Dorsolateral prefrontal cortex (tissue), 120 donors: ENCODE measurements at regions of chr20 and their contacts with region 1.

Region 1: DNA sequence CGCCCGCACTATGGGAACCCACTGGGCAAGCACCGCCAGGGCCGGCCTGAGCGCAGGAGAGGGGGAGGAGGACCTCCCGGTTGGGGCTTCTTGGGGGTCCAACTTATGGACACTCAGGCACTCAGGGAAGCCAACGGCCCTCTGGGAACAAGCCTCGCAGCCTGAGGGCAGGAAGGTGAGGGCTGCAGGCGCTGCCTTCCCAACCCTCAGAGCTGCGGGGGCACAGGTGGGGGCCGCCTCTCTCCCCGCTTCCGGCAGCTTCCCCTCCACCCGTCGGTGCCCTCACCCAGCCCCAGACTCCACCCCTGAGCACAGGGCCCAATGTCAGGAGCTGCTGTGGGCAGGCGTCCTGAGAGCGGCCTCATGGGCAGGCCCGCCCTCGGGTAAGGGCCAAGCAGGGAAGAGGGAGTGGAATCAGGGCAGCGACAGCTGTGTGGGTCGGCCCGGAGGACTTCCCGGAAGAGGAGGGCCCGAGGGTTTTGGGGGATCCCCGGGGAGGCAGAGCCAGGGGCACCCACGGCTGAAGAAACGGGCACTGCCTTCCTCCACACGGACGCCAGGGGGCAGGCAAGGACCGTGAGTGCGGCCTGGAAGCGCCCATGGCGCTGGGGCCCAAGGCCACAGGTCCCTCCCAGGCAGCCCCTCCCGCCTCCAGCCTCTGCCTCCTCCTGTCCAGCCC is 488 bp upstream of the PTK6 start:
- DNase-seq: peak in 9 of 10 donors; percentile 61 to 86 (median 66)
- H3K4me3 ChIP-seq: peak overlapping the region in 42 of 59 donors; percentile 0 to 51 (median 29)
- H3K27ac ChIP-seq: peak overlapping the region in 6 of 59 donors; percentile 9 to 56 (median 36)
- H3K27me3 ChIP-seq: peaks cover 0 to 15% (median 0%) of the 10 kb centered on the region in 45 donors
- CTCF ChIP-seq: peak; percentile 81 to 98 (median 96)

Region 2: GRCh38 chr20:63594043-63594561 is 56.4 kb after region 1 on chr20:
- intact Hi-C with region 1: no loop called
- DNase-seq: no peak
- H3K4me3 ChIP-seq: no peak overlapping the region
- H3K27ac ChIP-seq: peak overlapping the region in 1 of 59 donors; percentile 11
- H3K27me3 ChIP-seq: no peaks in the 10 kb centered on the region
- CTCF ChIP-seq: no peak

Region 3: DNA sequence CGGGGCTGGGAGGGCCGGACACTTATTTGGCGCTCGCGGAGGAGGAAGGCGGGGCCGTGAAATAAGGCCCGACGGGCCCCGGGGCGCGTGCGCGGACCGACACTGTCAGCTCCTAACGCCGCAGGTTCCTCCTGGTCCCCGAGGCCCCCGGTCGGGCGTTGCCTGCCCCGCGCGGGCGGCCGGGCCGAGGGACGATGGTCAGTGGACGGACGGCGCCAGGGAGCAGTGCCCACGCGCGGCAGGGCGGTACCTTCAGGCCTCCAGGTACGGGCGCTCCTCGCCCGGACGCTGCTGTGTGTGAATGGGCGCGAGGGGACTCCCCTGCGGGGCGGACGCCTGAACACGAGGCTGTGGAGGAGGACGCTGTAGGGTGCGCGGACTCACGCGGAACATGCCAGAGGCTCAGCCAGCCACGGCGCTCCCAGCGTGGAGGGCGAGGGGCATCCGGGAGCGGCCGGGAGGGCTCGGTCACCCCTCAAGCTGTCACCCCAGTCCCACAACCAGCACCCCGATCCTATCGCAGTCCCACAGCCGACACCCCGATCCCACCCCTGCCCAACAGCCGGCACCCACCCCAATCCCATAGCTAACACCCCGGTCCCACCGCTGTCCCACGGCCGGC is 89.6 kb after region 1 on chr20:
- intact Hi-C with region 1: loop called in 1 of 2 experiments (anchors 5 kb)
- DNase-seq: peak; percentile 83 to 94 (median 87)
- H3K4me3 ChIP-seq: peak overlapping the region; percentile 52 to 100 (median 97)
- H3K27ac ChIP-seq: peak overlapping the region; percentile 40 to 99 (median 97)
- H3K27me3 ChIP-seq: no peaks in the 10 kb centered on the region
- CTCF ChIP-seq: peak in 4 of 56 donors; percentile 10 to 34 (median 11)

Region 4: DNA sequence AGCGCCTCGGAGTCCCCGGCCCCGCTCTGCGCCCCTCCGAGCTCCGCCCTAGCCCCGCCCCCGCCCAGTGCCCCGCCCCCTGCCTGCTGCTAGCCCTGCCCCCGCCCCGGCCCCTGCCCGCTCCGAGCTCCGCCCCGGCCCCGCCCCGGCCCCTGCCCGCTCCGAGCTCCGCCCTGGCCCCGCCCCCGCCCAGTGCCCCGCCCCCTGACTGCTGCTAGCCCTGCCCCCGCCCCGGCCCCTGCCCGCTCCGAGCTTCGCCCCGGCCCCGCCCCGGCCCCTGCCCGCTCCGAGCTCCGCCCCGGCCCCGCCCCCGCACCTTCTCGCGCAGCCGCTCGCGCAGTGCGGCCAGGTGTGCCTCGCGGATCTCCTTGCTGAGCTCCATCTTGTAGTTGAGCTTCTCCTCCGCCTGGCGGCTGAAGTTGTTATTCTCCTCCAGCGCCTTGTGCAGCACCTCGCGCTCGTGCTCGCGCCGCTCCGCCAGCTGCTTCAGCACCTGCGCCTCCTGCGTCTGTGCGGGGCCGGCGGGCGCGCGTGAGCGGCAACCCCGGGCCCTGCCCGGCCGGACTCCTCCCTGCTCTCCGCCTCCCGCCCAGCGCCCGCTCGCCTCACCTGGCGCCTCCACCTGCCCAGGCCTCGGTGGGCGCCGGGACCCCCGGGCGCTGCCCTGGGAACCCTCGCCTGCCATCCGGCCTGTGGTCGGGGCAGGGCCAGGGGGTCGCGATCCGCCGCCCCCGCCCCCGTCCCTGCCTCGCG is 104.3 kb after region 1 on chr20:
- intact Hi-C with region 1: no loop called
- DNase-seq: peak; percentile 56 to 84 (median 76)
- H3K4me3 ChIP-seq: peak overlapping the region in 58 of 59 donors; percentile 29 to 71 (median 58)
- H3K27ac ChIP-seq: peak overlapping the region in 44 of 59 donors; percentile 6 to 88 (median 72)
- H3K27me3 ChIP-seq: no peaks in the 10 kb centered on the region
- CTCF ChIP-seq: peak in 29 of 56 donors; percentile 8 to 54 (median 22)

Region 5: DNA sequence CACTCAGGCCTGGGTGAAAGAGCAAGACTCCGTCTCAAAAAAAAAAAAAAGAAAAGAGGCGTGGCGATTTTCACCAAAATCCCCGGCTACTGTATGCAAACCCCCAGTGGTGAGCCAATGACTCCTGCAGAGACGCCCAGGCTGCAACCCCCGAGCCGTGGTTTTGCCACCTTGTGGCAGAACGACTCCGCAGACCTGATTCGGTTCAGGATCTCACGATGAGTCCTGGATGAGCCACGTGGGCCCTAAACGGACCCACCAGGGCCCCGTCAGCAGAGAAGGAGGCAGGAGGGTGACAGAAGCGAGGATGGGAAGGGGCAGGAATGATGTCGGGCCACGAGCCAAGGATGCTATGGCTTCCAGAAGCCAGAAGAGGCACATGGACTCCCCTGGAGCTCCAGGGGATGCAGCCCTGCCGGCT is 244.4 kb after region 1 on chr20:
- intact Hi-C with region 1: loop called in 1 of 2 experiments (anchors 5 kb)
- DNase-seq: no peak
- H3K4me3 ChIP-seq: no peak overlapping the region
- H3K27ac ChIP-seq: peak overlapping the region in 9 of 59 donors; percentile 5 to 84 (median 30)
- H3K27me3 ChIP-seq: no peaks in the 10 kb centered on the region
- CTCF ChIP-seq: peak in 2 of 56 donors; percentile 18 to 22

Region 6: GRCh38 chr20:63973636-63974402 is 436.2 kb after region 1 on chr20:
- intact Hi-C with region 1: loop called (anchors 5 kb)
- DNase-seq: peak; percentile 67 to 92 (median 86)
- H3K4me3 ChIP-seq: peak overlapping the region in 55 of 59 donors; percentile 7 to 63 (median 38)
- H3K27ac ChIP-seq: peak overlapping the region in 53 of 59 donors; percentile 6 to 88 (median 61)
- H3K27me3 ChIP-seq: peaks cover 0 to 13% (median 0%) of the 10 kb centered on the region in 45 donors
- CTCF ChIP-seq: peak; percentile 90 to 100 (median 98)

Region 7: DNA sequence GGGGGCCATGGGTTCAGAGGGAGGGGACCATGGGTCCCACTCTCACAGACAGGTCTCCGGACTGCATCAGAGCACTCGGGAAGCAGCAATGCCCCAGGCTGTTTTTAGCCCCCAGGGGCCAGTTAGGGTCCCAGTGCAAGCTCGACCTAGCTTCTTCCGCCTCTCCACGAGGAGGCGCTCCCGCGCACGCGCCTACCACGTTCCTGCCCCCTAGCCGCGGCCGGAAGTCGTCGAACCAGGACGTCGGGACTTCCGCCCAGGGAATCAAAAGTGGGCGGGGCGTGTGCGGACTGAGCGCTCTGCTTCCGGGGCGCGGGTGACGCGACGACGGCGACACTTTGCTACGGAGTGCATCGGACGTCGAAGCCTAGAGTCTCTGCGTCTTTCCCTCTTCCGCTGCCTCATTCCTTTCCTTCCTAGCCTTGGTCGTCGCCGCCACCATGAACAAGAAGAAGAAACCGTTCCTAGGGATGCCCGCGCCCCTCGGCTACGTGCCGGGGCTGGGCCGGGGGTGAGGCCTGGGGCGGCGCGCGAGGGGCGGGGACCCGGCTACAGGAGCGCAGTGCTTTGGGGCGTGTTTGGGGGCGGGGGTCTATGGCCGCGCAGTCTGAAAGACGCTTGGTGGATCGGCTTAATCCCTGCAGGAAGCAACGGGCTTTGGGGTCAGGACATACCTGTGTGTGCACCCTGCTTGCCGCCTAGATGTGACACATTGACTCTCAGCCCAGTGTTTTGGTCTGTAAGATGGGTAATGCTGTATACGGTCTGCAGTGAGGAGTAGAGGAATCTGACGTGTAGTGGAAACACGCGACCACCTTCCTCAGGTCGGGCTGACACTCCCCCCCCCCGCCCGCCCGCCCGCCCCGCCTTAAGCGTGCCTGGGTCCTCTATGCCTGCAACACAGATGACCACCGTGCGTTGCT is 443.4 kb after region 1 on chr20 and contains the start of gene PRPF6:
- intact Hi-C with region 1: loop called in 1 of 2 experiments (anchors 5 kb)
- DNase-seq: peak; percentile 92 to 96 (median 94)
- H3K4me3 ChIP-seq: peak within 1 kb of the TSS; percentile 73 to 100 (median 98)
- H3K27ac ChIP-seq: peak within 1 kb of the TSS in 55 of 59 donors; percentile 10 to 88 (median 73)
- H3K27me3 ChIP-seq: peaks cover 0 to 17% (median 0%) of the 10 kb centered on the region in 45 donors
- CTCF ChIP-seq: peak; percentile 73 to 99 (median 96)
- total RNA-seq, gene PRPF6: 41.9 to 83.8 (median 68.3) TPM